ENCODE measurements at regions of chr11 and their contacts with region 1.

Region 1: DNA sequence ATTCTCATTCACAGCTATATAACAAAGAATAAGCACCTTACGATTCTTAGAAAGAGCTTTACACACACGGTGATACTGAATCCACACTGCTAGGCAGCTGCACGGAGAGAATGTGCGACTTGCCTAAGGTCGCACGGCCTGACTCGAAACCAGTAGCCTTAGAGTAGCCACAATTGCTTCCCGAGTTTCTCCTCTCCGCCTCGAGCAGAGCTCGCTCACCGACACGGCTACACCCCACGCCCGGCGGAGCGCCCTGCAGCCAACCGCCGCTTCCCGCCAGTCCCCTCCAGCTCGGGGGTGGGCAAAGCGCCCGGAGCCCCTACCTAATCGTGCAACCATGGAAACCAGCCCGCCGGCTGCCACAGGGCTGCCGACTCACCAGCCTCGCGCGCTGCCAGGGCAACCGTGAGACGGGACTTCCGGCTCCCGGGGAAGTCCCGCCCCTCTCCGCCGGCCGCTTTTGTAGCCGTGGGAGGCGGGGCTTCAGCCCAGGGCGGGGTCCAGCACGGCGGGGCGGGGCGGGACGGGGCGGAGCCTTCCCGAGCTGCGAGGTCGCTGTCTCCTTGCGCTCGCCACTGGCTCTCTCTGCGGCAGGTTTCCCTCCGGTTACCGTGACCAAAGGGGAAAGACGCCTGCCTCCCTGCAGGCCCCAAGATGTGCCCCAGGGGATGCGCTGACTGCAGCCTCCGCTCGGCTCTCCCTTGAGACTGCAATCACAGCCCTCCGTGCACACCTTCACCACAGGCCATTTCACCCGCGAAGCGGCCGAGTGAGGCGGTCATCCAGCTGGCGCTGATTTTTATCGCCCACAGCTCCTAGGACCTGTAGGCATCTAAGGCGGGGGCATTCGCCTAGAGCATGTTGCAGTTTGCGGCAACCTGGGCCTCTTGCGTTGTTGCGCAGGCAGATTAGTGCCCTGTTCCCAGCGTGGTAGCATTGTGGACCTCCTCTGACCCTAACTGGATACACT is 1.1 kb downstream of the BSCL2 start:
- DNase-seq: peak; percentile 89
- H3K4me3 Mint-ChIP-seq: peak overlapping the region; percentile 89
- H3K27ac Mint-ChIP-seq: peak overlapping the region; percentile 79
- H3K4me1 Mint-ChIP-seq: peaks cover 49% of the 10 kb centered on the region
- H3K27me3 Mint-ChIP-seq: no peaks in the 10 kb centered on the region

Region 2: GRCh38 chr11:61899146-61899841 is 806.9 kb before region 1 on chr11:
- intact Hi-C with region 1: no loop called
- DNase-seq: peak; percentile 86
- H3K4me3 Mint-ChIP-seq: no peak overlapping the region
- H3K27ac Mint-ChIP-seq: no peak overlapping the region
- H3K4me1 Mint-ChIP-seq: peaks cover 5% of the 10 kb centered on the region
- H3K27me3 Mint-ChIP-seq: peaks cover 4% of the 10 kb centered on the region

Region 3: DNA sequence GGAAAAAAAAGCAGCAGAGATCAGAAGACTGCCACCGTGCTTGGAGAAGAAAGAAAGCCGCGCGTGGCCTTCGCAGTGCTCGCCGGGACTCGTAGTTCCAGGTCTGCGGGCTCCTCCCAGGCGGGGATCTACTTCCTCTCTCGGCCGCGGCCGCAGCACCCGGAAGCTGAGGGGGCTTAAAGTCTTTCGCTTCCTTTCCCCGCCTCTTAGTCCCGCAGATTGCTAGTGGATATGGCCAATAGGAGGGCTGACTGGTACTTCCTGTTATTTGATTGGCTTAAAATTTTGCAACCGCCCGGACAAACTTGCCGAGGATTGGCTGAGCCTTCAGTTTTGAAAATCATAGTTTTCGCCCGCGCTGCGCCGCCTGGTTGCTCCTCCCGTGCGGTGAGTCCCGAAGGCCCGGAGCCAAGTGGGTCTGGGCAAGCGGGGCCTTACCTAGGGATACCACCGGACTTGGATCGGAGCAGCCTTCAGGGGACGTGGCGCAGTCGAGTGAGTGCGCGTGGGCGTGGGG is 582.4 kb before region 1 on chr11 and contains the start of gene INCENP:
- intact Hi-C with region 1: loop called (anchors 5 kb)
- DNase-seq: peak; percentile 94
- H3K4me3 Mint-ChIP-seq: peak within 1 kb of the TSS; percentile 94
- H3K27ac Mint-ChIP-seq: peak within 1 kb of the TSS; percentile 73
- H3K4me1 Mint-ChIP-seq: peaks cover 33% of the 10 kb centered on the region
- H3K27me3 Mint-ChIP-seq: peaks cover 11% of the 10 kb centered on the region
- total RNA-seq, gene INCENP: 94.3 and 98.1 TPM in 2 replicates

Region 4: DNA sequence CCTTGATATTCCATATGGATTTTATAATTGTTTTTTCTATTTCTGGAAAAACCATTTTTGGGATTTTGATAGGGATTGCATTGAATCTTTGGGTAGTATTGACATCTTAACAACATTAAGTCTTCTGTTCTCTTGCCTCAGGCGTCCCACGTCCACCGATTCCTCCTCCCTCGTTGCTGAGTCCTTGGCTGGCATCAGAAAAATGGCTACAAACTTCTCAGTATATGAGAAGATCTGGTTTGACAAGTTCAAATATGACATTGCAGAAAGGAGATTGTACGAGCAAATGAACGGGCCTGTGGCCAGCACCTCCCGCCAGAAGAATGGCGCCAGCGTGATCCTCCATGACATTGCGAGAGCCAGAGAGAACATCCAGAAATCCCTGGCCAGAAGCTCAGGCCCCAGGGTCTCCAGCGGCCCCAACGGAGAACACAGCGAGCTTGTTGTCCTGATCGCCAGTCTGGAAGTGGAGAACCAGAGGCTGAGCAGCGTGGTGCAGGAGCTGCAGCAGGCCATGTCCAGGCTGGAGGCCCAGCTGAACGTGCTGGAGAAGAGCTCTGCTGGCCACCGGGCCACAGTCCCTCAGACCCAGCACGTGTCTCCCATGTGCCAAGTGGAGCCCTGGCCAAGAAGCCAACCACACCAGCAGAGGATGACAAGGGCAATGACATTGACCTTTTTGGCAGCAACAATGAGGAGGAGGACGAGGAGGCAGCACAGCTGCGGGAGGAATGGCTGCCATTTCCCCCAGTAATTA is 536.9 kb before region 1 on chr11:
- intact Hi-C with region 1: no loop called
- DNase-seq: no peak
- H3K4me3 Mint-ChIP-seq: no peak overlapping the region
- H3K27ac Mint-ChIP-seq: no peak overlapping the region
- H3K4me1 Mint-ChIP-seq: peaks cover 5% of the 10 kb centered on the region
- H3K27me3 Mint-ChIP-seq: peaks cover 19% of the 10 kb centered on the region

Region 5: DNA sequence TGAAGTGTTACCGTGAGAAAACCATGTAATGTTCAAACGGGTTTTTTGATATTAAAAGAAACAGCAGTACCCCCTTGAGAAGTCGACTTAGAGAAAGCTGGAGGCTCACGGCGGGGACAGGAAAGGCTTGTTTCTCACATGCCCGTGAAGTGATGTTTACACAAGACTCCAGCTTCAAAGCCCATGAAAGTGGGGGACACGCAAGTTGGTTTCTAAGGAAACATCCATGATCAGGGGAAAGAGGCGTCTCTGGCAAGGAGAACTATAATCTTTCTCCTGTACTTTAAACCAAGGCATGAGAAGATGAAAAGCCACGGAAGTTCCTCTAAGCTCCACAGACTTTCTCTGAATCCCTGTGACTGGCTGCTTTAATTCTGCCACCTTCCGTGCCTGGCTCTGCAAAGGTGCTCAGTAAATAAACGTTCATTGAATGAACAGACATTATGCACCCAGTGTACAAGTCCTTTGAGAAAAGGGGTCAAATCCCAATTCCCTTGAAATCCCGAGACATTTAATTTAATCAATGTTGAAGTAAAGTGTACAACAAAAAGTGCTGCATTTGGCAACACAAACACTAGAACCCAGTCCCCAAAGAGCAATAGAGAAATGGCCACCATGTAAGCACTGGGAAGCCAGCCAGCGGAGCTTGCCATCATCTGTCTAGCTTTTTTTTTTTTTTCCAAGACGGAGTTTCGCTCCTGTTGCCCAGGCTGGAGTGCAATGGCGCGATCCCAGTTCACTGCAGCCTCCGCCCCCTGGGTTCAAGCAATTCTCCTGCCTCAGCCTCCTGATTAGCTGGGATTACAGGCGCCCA is 218.2 kb before region 1 on chr11:
- intact Hi-C with region 1: no loop called
- DNase-seq: no peak
- H3K4me3 Mint-ChIP-seq: no peak overlapping the region
- H3K27ac Mint-ChIP-seq: no peak overlapping the region
- H3K4me1 Mint-ChIP-seq: no peaks in the 10 kb centered on the region
- H3K27me3 Mint-ChIP-seq: peaks cover 6% of the 10 kb centered on the region

Region 6: GRCh38 chr11:62645956-62646824 is 60.0 kb before region 1 on chr11 and contains the start of gene GANAB:
- intact Hi-C with region 1: loop called (anchors 1 kb)
- DNase-seq: peak; percentile 97
- H3K4me3 Mint-ChIP-seq: peak within 1 kb of the TSS; percentile 100
- H3K27ac Mint-ChIP-seq: peak within 1 kb of the TSS; percentile 98
- H3K4me1 Mint-ChIP-seq: peaks cover 25% of the 10 kb centered on the region
- H3K27me3 Mint-ChIP-seq: no peaks in the 10 kb centered on the region
- total RNA-seq, gene GANAB: 238 and 255 TPM in 2 replicates

Region 7: DNA sequence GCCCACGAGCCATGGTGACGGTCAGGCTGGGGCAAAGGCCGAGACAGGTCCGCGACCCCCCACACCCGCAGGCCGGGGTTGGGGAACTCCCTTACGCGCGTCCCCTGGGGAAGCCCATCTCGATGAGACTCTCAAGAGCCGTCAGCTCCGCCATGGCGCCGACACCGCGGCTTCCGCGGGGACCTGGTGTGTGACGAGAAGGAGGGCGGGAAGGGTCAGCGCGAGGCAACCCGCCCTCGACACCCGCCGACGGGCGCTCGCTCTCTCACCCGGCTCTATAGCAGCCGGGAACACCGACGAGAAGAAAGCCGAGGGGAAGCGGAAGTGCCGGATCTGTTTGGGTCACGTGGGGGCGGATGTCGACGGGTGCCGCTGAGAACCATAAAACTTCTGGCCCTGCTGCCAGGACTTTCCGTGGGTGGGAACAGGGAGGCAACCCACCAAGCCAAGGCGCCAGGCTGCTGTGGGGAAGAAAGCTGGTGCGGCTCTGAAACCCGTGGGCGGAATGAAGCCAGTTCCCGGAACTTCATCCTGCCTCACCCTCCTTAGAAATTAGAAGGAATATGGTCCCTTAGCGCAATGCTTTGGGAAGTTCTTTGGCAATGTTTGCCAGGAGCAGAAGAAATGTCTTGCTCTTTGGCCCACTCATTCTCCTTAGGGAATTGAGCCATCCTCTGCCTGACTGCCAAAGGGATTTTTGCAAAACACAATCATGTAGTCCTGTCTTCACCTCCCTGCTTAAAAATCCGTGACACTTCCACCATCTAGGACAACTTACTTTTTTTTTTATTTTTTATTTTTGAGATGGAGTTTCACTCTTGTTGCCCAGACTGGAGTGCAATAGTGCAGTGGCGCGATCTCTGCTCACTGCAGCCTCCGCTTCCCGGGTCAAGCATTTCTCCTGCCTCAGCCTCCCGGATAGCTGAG is 27.1 kb before region 1 on chr11 and contains the start of gene UBXN1:
- intact Hi-C with region 1: loop called (anchors 1 kb)
- DNase-seq: peak; percentile 79
- H3K4me3 Mint-ChIP-seq: peak within 1 kb of the TSS; percentile 80
- H3K27ac Mint-ChIP-seq: peak within 1 kb of the TSS; percentile 82
- H3K4me1 Mint-ChIP-seq: peaks cover 36% of the 10 kb centered on the region
- H3K27me3 Mint-ChIP-seq: no peaks in the 10 kb centered on the region
- total RNA-seq, gene UBXN1: 125 and 128 TPM in 2 replicates

Region 8: GRCh38 chr11:62805076-62805892 is 99.1 kb after region 1 on chr11 and contains the start of gene NXF1:
- intact Hi-C with region 1: loop called (anchors 1 kb)
- DNase-seq: peak; percentile 95
- H3K4me3 Mint-ChIP-seq: peak within 1 kb of the TSS; percentile 100
- H3K27ac Mint-ChIP-seq: peak within 1 kb of the TSS; percentile 99
- H3K4me1 Mint-ChIP-seq: peaks cover 40% of the 10 kb centered on the region
- H3K27me3 Mint-ChIP-seq: peaks cover 2% of the 10 kb centered on the region
- total RNA-seq, gene NXF1: 155 and 158 TPM in 2 replicates

Region 9: GRCh38 chr11:62880803-62881578 is 174.8 kb after region 1 on chr11 and contains the start of gene SLC3A2:
- intact Hi-C with region 1: loop called (anchors 1 kb)
- DNase-seq: peak; percentile 83
- H3K4me3 Mint-ChIP-seq: peak within 1 kb of the TSS; percentile 99
- H3K27ac Mint-ChIP-seq: peak within 1 kb of the TSS; percentile 100
- H3K4me1 Mint-ChIP-seq: peaks cover 52% of the 10 kb centered on the region
- H3K27me3 Mint-ChIP-seq: peaks cover 2% of the 10 kb centered on the region
- total RNA-seq, gene SLC3A2: 397 and 399 TPM in 2 replicates

Measured in activated T-helper 1 cell treated with anti-CD3 and anti-CD28 coated beads, Interleukin-12 subunit alpha, Interleukin-12 subunit beta, Interleukin-2, Interleukin-4 antibody, amounts not matched to agents 30 ng/mL and 10 ng/mL and 1 ng/mL, durations not matched to agents 14 hours and 24 hours and 36 hours (primary cell).